ENCODE measurements at regions of chr2 and their contacts with region 1.

Region 1: DNA sequence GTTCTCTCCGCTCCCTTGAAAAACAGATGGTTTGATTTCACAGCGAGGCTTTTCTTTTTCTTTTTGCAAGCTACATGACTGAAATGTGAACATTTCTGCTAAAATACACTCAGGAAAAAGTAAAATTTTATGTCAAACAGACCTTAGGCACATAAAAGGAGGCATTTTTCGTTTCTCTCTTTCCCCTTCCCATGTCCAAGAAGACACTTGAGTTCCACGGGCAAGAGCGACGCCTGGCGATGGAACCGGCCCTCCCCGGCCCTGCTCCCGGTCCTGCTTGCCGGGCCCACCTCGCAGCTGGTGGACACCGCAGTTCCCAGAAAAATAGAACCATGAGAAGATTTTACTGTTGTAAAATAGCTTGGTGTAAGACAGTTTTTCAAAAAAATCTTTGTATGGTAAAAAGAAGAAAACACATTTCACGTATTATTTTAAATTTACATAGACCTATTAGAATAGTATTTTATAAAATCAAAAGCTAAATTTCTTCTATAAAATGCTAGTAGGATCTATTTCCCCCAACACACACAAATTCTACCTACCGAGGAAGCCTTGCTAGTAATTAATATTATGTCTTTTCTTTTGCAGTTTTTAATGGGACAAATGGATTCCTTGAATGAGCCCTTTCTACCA is 2.3 kb upstream of the ALKAL2 start:
- DNase-seq: peak; percentile 68 to 83 (median 78)
- ATAC-seq: peak; percentile 99
- H3K4me3 ChIP-seq: peak overlapping the region; percentile 36
- H3K27ac ChIP-seq: no peak overlapping the region
- H3K4me1 ChIP-seq: peaks cover 0 to 13% of the 10 kb centered on the region in 2 experiments; a peak in 3 of 5 replicates
- H3K27me3 ChIP-seq: peaks cover 0 to under 1% of the 10 kb centered on the region in 2 experiments; a peak in 1 of 5 replicates
- CTCF ChIP-seq: peak; percentile 80 to 89 (median 85)
- EP300 ChIP-seq: no peak
- POLR2A ChIP-seq: no peak
- RAD21 ChIP-seq: peak; percentile 86 to 90

Region 2: GRCh38 chr2:175880-176800 is 114.1 kb before region 1 on chr2:
- CTCF ChIA-PET with region 1: interaction called, 34 read pairs
- POLR2A ChIA-PET with region 1: no interaction called
- in situ Hi-C with region 1: no loop called
- intact Hi-C with region 1: loop called (anchors 1 kb)
- DNase-seq: no peak
- ATAC-seq: no peak
- H3K4me3 ChIP-seq: no peak overlapping the region
- H3K27ac ChIP-seq: no peak overlapping the region
- H3K4me1 ChIP-seq: no peaks in the 10 kb centered on the region
- H3K27me3 ChIP-seq: no peaks in the 10 kb centered on the region
- CTCF ChIP-seq: no peak
- EP300 ChIP-seq: no peak
- POLR2A ChIP-seq: no peak
- RAD21 ChIP-seq: no peak

Region 3: DNA sequence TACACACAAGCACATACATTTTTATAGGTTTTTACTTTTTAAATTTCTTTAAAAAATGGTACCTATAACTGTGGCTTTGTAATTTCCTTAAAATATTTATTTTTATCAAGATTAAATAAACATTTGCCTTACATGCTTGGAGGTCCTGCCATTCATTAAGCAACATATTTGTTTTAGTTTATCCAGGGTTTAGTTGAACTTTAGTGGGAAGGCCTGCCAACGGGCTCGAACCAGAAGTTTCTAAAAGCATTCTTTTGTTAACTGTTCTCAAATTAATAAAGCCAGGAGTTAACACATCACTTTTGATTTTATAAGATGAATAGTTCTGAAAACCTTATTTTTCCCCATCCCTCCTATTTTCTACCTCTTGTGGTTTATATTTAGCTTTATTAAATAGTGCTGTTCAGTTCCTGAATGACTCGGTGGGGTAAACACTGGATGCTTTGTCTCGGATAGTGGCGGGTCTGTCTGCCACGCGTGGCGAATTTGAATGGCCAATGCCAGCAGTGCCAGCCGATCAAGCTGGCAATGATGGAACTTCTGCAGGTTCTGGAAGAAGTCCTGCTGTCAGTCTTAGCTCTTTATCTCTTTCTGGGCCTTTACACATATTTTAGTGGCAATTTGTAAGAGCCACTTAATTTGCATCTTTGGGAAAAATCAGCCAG is 58.6 kb before region 1 on chr2:
- CTCF ChIA-PET with region 1: no interaction called
- POLR2A ChIA-PET with region 1: no interaction called
- in situ Hi-C with region 1: no loop called
- intact Hi-C with region 1: no loop called
- DNase-seq: no peak
- ATAC-seq: no peak
- H3K4me3 ChIP-seq: no peak overlapping the region
- H3K27ac ChIP-seq: no peak overlapping the region
- H3K4me1 ChIP-seq: no peaks in the 10 kb centered on the region; a peak in 1 of 5 replicates
- H3K27me3 ChIP-seq: no peaks in the 10 kb centered on the region; a peak in 1 of 5 replicates
- CTCF ChIP-seq: no peak
- EP300 ChIP-seq: no peak
- POLR2A ChIP-seq: no peak
- RAD21 ChIP-seq: no peak

Region 4: DNA sequence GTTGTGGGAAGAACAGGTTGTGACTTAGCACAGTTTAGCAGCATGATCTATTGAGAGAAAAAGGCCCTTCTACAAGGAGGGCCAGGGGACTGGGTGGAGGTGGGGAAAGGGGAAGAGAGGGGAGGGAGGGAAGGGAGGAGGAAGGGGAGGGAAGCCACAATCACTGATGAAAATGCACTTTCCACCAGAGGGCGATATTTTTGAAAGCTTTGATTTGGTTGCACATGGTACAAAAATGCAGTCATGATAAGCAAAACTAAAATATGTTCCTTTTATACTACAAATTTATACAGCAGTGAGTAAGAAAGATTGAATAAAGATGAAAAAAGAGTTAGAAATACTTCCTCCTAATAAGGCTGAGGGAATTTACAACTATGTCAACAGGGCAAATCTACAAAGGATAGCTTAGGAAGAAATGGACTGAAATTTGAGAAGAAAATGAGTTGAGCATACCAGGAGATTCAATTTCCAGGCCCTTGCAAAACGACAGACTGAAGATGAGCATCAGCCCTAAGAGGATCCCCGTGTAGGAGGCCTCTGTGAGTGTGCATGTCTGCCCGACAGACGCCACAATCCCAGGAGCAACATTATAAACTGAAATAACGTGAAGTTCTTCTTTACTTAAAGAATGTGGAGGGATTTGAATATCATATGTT is 43.6 kb before region 1 on chr2:
- CTCF ChIA-PET with region 1: interaction called, 13 read pairs
- POLR2A ChIA-PET with region 1: no interaction called
- in situ Hi-C with region 1: no loop called
- intact Hi-C with region 1: loop called (anchors 1 kb)
- DNase-seq: peak; percentile 20 to 71 (median 28)
- ATAC-seq: peak; percentile 81
- H3K4me3 ChIP-seq: no peak overlapping the region
- H3K27ac ChIP-seq: no peak overlapping the region
- H3K4me1 ChIP-seq: no peaks in the 10 kb centered on the region
- H3K27me3 ChIP-seq: peaks cover 0 to 4% of the 10 kb centered on the region in 2 experiments; a peak in 1 of 5 replicates
- CTCF ChIP-seq: peak; percentile 37 to 59 (median 45); a peak in 4 of 6 replicates
- EP300 ChIP-seq: no peak
- POLR2A ChIP-seq: no peak
- RAD21 ChIP-seq: peak in 1 of 2 experiments; percentile 44; a peak in 2 of 4 replicates